Endothelial cell of umbilical vein (primary cell): ENCODE measurements at regions of chr10 and their contacts with region 1.

Region 1: DNA sequence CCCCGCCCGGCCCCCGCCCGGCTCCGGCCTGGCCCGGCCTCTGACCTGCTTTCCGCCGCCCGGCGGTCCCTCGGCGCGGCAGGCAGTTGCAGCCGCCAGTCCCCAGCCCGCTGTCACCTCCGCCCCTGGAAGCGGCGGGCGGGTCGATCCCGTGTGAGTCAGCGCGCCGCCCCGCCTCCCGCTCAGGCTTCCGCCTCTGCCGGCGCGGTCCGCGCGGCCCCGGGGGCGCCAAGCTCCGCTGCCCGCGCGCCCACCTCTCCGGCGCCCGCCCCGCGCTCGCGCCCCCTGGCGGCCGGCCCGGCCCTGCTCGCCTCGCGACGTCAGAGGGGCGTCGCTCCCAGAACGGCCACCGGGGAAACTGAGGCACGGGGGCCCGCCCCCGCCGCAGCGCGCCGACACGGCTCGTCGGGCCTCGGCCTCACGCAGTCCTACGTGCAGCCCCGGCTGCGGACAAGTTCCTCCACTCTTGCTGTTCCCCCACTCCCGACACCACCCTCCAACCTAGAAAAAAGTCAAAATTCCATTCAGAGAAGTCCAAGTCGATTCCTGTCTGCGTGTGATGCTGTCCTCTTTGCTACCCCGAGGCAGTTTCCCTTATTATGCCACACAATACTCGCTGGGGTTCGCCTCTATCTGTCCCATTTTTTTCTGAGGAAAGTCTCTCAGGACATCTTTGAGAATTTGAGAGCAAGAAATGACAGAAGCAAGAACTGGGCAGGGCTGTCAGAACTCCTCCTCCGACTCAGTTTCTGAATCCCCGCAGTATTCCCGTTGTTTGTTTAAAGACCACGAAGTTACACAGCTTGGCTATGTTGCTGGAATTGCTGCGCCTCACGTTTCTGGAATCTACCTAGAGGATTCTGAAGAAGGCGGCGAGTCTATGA is at the start of gene DNMBP:
- DNase-seq: peak; percentile 83
- H3K4me3 ChIP-seq: peak within 1 kb of the TSS; percentile 75 to 99 (median 96)
- H3K27ac ChIP-seq: peak within 1 kb of the TSS; percentile 83
- H3K4me1 ChIP-seq: peaks cover 31% of the 10 kb centered on the region
- H3K27me3 ChIP-seq: no peaks in the 10 kb centered on the region
- CTCF ChIP-seq: peak; percentile 37 to 63
- POLR2A ChIP-seq: peak; percentile 74
- total RNA-seq, gene DNMBP: 53.4 and 56.1 TPM in 2 replicates

Region 2: DNA sequence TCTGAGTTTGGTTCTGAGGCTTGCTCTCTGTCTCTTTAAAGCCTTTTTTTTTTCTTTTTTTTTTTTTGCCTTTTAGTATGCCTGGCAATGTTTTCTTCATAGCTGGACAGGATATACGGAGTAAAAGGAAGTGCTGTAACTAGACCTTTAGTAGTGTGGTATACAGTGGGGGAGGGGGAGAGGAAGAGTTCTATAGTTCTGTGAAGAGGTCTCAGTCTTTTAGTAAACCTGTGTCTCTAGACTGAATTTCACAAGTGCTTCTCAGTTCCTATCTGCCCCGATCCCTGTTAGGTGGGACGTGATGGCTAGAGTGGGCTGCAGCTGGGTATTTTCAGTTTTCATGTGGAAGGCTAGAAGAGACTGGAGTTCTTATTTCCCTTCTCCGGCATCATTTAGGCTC is 230.7 kb before region 1 on chr10:
- CTCF ChIA-PET with region 1: interaction called, 3 read pairs
- POLR2A ChIA-PET with region 1: no interaction called
- dilution Hi-C with region 1: no loop called
- intact Hi-C with region 1: loop called (anchors 5 kb)
- DNase-seq: peak; percentile 95
- H3K4me3 ChIP-seq: peak overlapping the region; percentile 0 to 75 (median 42)
- H3K27ac ChIP-seq: peak overlapping the region; percentile 100
- H3K4me1 ChIP-seq: peaks cover 79% of the 10 kb centered on the region
- H3K27me3 ChIP-seq: no peaks in the 10 kb centered on the region
- CTCF ChIP-seq: no peak
- POLR2A ChIP-seq: peak; percentile 41

Region 3: DNA sequence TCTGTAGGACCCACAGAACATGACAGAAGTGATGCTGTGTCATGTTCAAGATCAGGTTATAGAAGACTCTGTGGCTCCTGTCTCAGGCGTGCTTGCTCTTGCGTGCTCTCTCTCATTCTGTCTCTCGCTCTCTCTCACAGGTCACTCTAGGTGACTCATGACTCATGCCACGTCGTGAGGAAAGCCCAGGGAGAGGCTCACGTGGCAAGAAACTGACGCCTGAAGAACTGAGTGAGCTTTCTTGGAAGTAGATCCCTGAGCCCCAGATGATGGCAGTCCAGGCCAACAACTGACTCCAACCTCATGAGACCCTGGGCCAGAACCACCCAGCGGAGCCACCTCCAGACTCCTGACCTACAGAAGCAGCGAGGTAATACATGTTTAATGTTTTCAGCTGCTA is 103.6 kb before region 1 on chr10:
- CTCF ChIA-PET with region 1: interaction called, 62 read pairs
- POLR2A ChIA-PET with region 1: no interaction called
- dilution Hi-C with region 1: no loop called
- intact Hi-C with region 1: loop called (anchors 1 kb)
- DNase-seq: peak; percentile 67
- H3K4me3 ChIP-seq: no peak overlapping the region
- H3K27ac ChIP-seq: peak overlapping the region; percentile 66
- H3K4me1 ChIP-seq: peaks cover 21% of the 10 kb centered on the region
- H3K27me3 ChIP-seq: no peaks in the 10 kb centered on the region
- CTCF ChIP-seq: peak; percentile 8 to 36
- POLR2A ChIP-seq: no peak

Region 4: DNA sequence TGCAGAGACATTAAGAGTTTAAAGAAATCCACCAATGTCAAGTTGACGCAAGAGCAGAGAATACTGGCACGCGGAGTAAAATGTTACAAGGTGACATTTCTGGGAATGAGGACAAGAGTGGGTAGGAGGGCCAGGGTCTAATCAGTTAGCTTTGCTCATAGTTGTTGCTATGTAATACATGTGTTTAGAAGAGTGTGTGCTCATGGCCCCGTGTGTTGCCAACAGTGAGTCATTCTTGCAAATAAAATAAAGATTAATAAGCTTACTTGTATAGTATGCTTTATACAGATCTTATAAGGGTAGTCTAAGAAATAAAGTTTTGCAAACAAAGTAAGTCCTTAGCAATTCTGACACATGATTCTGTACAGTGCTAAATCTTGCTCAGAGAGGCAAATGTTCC is 64.8 kb before region 1 on chr10:
- CTCF ChIA-PET with region 1: interaction called, 10 read pairs
- POLR2A ChIA-PET with region 1: no interaction called
- dilution Hi-C with region 1: no loop called
- intact Hi-C with region 1: no loop called
- DNase-seq: peak; percentile 88
- H3K4me3 ChIP-seq: no peak overlapping the region
- H3K27ac ChIP-seq: peak overlapping the region; percentile 69
- H3K4me1 ChIP-seq: peaks cover 65% of the 10 kb centered on the region
- H3K27me3 ChIP-seq: no peaks in the 10 kb centered on the region
- CTCF ChIP-seq: no peak
- POLR2A ChIP-seq: no peak

Region 5: GRCh38 chr10:99983280-99983988 is 26.6 kb before region 1 on chr10:
- CTCF ChIA-PET with region 1: interaction called, 23 read pairs
- POLR2A ChIA-PET with region 1: interaction called, 3 read pairs
- dilution Hi-C with region 1: no loop called
- intact Hi-C with region 1: loop called (anchors 1 kb)
- DNase-seq: peak; percentile 90
- H3K4me3 ChIP-seq: peak overlapping the region in 1 of 3 experiments; percentile 6
- H3K27ac ChIP-seq: peak overlapping the region; percentile 82
- H3K4me1 ChIP-seq: peaks cover 65% of the 10 kb centered on the region
- H3K27me3 ChIP-seq: no peaks in the 10 kb centered on the region
- CTCF ChIP-seq: no peak
- POLR2A ChIP-seq: peak; percentile 70

Region 6: GRCh38 chr10:100020142-100020885 is 10.3 kb after region 1 on chr10:
- CTCF ChIA-PET with region 1: interaction called, 10 read pairs
- POLR2A ChIA-PET with region 1: no interaction called
- dilution Hi-C with region 1: no loop called
- intact Hi-C with region 1: no loop called
- DNase-seq: no peak
- H3K4me3 ChIP-seq: no peak overlapping the region
- H3K27ac ChIP-seq: no peak overlapping the region
- H3K4me1 ChIP-seq: no peaks in the 10 kb centered on the region
- H3K27me3 ChIP-seq: peaks cover 0 to 2% of the 10 kb centered on the region in 2 experiments
- CTCF ChIP-seq: no peak
- POLR2A ChIP-seq: no peak

Region 7: DNA sequence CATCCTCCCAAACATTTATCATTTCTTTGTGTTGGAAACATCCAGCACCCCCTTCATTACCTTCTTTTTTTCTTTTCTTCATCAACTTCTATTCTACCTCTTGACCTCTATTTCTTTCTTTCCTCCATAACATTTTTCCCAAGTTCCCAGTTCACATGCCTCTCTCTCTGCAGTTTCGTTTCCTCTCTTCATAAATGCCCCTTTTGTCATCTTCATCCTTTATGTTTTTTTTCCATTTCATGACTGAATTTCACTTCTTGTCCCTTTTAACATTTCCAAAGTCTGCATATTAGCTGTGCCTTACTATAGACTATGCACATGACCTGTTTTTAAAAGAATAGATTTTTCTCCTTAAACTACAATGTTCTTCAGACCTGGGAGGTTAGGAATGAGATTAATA is 47.9 kb after region 1 on chr10:
- CTCF ChIA-PET with region 1: no interaction called
- POLR2A ChIA-PET with region 1: no interaction called
- dilution Hi-C with region 1: no loop called
- intact Hi-C with region 1: no loop called
- DNase-seq: no peak
- H3K4me3 ChIP-seq: no peak overlapping the region
- H3K27ac ChIP-seq: no peak overlapping the region
- H3K4me1 ChIP-seq: no peaks in the 10 kb centered on the region
- H3K27me3 ChIP-seq: peaks cover 18 to 25% of the 10 kb centered on the region in 2 experiments
- CTCF ChIP-seq: no peak
- POLR2A ChIP-seq: no peak

Region 8: GRCh38 chr10:100254191-100254590 is 244.2 kb after region 1 on chr10:
- CTCF ChIA-PET with region 1: no interaction called
- POLR2A ChIA-PET with region 1: no interaction called
- dilution Hi-C with region 1: no loop called
- intact Hi-C with region 1: no loop called
- DNase-seq: no peak
- H3K4me3 ChIP-seq: no peak overlapping the region
- H3K27ac ChIP-seq: no peak overlapping the region
- H3K4me1 ChIP-seq: no peaks in the 10 kb centered on the region
- H3K27me3 ChIP-seq: no peaks in the 10 kb centered on the region
- CTCF ChIP-seq: no peak
- POLR2A ChIP-seq: no peak